IMR-90 (cell line): ENCODE measurements at regions of chr11 and their contacts with region 1.

Region 1: DNA sequence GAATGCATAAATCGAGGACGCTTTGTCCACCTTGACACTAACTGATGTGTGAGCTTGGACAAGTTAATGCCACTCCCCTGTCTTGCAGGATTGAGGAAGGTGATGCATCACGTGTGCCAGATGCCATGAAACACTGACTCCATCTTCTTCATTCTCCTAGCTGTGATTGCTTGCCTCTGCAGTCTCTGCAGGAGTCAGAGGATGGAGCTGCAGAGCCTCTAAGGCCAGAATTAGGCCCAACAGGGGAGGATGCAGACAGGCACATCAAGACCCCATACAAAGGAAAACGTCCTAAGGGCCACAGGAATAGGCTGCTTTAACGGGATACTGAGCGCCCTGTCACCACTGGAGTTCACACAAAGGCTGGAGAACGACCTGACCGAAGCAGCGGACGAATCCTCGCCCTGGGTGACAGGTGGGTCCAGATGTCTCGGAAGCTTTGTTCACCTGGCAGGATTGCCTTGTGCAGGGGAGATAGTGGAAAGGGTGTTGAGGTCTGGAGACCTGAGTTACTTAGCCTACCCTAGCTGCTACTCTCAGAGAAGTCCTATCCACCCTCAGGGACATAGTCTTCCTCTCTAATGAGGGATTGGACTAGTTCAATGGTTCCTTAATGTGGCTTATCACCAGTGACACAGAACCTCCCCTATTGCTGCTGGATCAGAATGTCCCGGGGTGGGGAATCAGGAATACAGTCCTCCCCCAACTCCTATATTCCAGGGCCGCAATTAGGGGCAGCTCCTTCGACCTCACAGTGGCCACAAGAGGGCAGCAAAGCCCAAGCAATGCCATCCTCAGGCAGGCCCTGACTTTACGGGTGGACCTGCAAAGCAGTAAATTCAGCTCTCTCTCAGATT is 32.4 kb downstream of the DBX1 start:
- DNase-seq: peak; percentile 69
- ATAC-seq: peak; percentile 82
- H3K4me3 ChIP-seq: no peak overlapping the region
- H3K27ac ChIP-seq: no peak overlapping the region
- H3K4me1 ChIP-seq: no peaks in the 10 kb centered on the region
- H3K27me3 ChIP-seq: no peaks in the 10 kb centered on the region; the same call in 1 of the 2 replicates
- CTCF ChIP-seq: peak; percentile 87
- POLR2A ChIP-seq: no peak
- RAD21 ChIP-seq: peak; percentile 88

Region 2: GRCh38 chr11:19311308-19312030 is 816.4 kb before region 1 on chr11:
- CTCF ChIA-PET with region 1: no interaction called
- POLR2A ChIA-PET with region 1: no interaction called
- dilution Hi-C with region 1: no loop called
- in situ Hi-C with region 1: loop called (anchors 25 kb)
- intact Hi-C with region 1: no loop called
- DNase-seq: peak; percentile 50
- ATAC-seq: peak; percentile 100
- H3K4me3 ChIP-seq: no peak overlapping the region
- H3K27ac ChIP-seq: no peak overlapping the region
- H3K4me1 ChIP-seq: no peaks in the 10 kb centered on the region
- H3K27me3 ChIP-seq: peaks cover 45% of the 10 kb centered on the region
- CTCF ChIP-seq: peak; percentile 88
- POLR2A ChIP-seq: no peak
- RAD21 ChIP-seq: peak; percentile 83

Region 3: DNA sequence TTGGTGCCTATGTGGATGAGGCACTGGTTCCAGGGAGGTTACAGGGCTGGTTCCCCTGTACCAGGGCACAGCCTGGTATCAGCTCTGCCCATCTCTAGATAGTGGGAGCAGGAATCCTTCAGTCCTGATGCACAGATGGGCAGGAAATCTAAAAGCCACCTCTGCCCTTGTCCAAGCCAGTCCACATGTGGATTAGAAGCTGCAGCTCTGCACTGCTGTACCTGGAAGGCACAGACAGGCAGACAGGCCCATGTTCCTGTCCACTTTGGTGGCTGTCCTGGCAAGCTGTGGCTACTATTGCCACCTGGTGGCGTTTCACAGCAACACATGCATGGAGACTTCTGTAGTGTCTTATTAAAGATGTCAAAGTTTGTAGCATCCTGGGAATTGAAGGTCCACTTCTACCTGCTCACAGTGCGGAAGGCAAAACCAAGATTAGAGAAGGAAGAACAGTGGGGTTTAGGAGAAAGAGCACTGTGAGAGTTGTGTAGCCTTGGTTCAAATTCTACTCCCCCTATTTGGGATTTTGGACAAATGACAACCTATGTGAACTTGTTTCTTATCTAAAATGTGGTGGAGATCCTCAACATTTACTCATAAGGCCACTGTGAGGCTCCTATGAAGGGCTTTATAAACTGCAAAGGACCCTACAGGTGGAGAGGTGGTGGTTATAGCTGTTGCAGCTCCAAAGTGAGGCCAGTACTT is 385.2 kb before region 1 on chr11:
- CTCF ChIA-PET with region 1: no interaction called
- POLR2A ChIA-PET with region 1: no interaction called
- dilution Hi-C with region 1: no loop called
- in situ Hi-C with region 1: loop called (anchors 10 kb)
- intact Hi-C with region 1: no loop called
- DNase-seq: peak; percentile 79
- ATAC-seq: peak; percentile 92
- H3K4me3 ChIP-seq: no peak overlapping the region
- H3K27ac ChIP-seq: no peak overlapping the region
- H3K4me1 ChIP-seq: no peaks in the 10 kb centered on the region
- H3K27me3 ChIP-seq: no peaks in the 10 kb centered on the region
- CTCF ChIP-seq: peak; percentile 89
- POLR2A ChIP-seq: no peak
- RAD21 ChIP-seq: peak; percentile 97

Region 4: GRCh38 chr11:19779740-19780139 is 348.2 kb before region 1 on chr11:
- CTCF ChIA-PET with region 1: no interaction called
- POLR2A ChIA-PET with region 1: no interaction called
- dilution Hi-C with region 1: no loop called
- in situ Hi-C with region 1: no loop called
- intact Hi-C with region 1: no loop called
- DNase-seq: no peak
- ATAC-seq: no peak
- H3K4me3 ChIP-seq: no peak overlapping the region
- H3K27ac ChIP-seq: no peak overlapping the region
- H3K4me1 ChIP-seq: peaks cover 2% of the 10 kb centered on the region; the same call in 1 of the 2 replicates
- H3K27me3 ChIP-seq: no peaks in the 10 kb centered on the region; the same call in 1 of the 2 replicates
- CTCF ChIP-seq: no peak
- POLR2A ChIP-seq: no peak
- RAD21 ChIP-seq: no peak

Region 5: DNA sequence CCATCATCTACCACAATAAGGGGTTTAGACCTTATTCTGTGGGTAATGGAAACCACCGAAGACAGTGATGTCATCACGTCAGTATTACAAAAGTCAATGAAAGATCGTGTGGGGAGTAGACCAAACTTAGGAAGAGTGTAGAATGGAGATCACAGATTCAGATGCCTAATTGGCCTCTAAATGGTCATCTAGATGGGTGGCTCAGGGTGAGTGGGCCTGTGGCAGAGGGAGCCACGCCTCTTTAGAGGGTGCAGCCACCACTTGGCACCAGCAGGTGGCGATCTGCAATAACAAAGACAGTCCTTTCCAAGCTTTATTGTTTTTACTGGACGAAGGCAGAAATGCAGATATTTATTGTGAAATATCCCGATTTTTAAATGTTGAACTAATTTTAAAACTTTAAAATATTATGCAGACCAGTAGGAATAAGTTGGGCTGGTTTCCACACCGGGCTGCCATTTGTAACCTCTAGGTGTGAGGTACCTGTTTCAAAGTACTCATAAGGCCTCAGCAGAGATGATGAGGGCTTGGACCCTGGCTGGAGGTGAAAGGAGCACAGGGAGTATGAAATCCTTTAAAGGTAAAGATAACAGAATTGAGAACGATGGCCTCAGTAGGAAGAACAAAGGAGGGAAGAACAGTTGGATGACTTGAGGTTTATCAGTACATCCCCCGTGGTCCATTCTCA is 189.6 kb before region 1 on chr11:
- CTCF ChIA-PET with region 1: interaction called, 14 read pairs
- POLR2A ChIA-PET with region 1: interaction called, 4 read pairs
- dilution Hi-C with region 1: no loop called
- in situ Hi-C with region 1: no loop called
- intact Hi-C with region 1: loop called (anchors 1 kb)
- DNase-seq: peak; percentile 54
- ATAC-seq: peak; percentile 71
- H3K4me3 ChIP-seq: no peak overlapping the region
- H3K27ac ChIP-seq: no peak overlapping the region
- H3K4me1 ChIP-seq: peaks cover 11% of the 10 kb centered on the region
- H3K27me3 ChIP-seq: no peaks in the 10 kb centered on the region
- CTCF ChIP-seq: peak; percentile 74
- POLR2A ChIP-seq: no peak
- RAD21 ChIP-seq: peak; percentile 63

Region 6: DNA sequence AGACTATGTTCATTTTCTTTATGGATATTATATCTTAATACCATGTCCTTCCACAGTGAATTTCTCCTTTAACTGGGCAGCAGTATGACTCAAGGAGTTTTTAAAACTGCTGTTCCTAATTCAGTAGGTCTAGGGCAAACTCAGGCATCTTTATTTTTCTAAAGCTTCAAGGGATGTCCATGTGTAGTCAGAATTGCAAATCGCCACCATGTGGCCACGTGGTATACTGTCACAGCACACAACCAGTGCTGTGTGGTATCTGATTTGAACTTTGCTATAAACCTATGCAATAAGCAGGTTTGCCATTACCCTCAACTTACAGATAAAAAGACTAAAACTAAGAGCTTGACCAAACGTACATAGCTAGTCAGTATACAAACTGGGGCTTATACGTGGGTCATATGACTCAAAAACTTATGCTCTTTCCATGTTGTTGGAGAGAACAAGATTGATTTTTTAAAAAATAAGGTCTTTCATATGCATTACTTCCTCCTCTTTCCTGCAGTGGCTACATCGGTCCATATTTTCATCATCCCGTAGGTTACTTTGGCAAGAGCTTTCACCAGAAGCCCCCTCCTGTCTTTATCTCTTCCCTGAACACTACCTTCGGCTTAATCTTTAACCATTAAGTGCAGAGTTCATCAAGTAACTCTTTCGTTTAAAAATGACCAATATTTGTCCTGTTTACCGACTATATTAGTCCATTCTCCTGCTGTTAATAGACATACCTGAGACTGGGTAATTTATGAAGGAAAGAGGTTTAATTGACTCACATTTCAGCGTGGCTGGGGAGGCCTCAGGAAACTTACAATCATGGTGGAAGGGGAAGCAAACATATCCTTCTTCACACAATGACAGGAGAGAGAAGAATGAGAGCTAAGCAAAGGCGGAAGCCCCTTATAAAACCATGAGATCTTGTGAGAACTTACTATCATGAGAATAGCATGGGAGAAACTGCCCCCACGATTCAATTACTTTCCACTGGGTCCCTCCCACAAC is 227.6 kb after region 1 on chr11:
- CTCF ChIA-PET with region 1: interaction called, 21 read pairs
- POLR2A ChIA-PET with region 1: interaction called, 3 read pairs
- dilution Hi-C with region 1: no loop called
- in situ Hi-C with region 1: loop called (anchors 5 kb)
- intact Hi-C with region 1: loop called (anchors 1 kb)
- DNase-seq: peak; percentile 58
- ATAC-seq: peak; percentile 92
- H3K4me3 ChIP-seq: no peak overlapping the region
- H3K27ac ChIP-seq: no peak overlapping the region
- H3K4me1 ChIP-seq: peaks cover 2% of the 10 kb centered on the region; the same call in 1 of the 2 replicates
- H3K27me3 ChIP-seq: peaks cover 15% of the 10 kb centered on the region
- CTCF ChIP-seq: peak; percentile 62
- POLR2A ChIP-seq: no peak
- RAD21 ChIP-seq: peak; percentile 36; the same call in 1 of the 2 replicates

Region 7: DNA sequence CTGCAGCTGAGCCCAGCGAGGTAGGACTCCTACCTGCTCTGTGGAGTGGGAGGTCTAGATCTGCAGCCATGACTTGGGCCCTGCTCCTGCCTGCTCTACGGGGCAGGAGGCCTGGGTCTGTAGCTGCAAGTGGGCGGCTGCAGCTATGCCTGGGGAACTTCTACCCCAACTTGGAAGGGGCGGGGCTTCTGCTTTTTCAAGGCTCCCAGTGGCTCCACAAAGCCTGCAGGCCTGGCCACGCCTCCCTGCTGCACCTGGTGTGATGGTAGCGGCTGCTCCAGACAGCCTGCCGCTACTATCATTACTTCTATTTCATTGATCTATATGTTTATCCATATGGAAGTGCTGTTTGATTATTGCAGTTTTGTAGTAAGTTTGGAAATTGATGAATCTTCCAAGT is 662.7 kb after region 1 on chr11:
- CTCF ChIA-PET with region 1: no interaction called
- POLR2A ChIA-PET with region 1: no interaction called
- dilution Hi-C with region 1: no loop called
- in situ Hi-C with region 1: no loop called
- intact Hi-C with region 1: no loop called
- DNase-seq: no peak
- ATAC-seq: no peak
- H3K4me3 ChIP-seq: no peak overlapping the region
- H3K27ac ChIP-seq: no peak overlapping the region
- H3K4me1 ChIP-seq: no peaks in the 10 kb centered on the region
- H3K27me3 ChIP-seq: no peaks in the 10 kb centered on the region
- CTCF ChIP-seq: no peak
- POLR2A ChIP-seq: no peak
- RAD21 ChIP-seq: no peak